Common myeloid progenitor, CD34-positive (primary cell): ENCODE measurements at regions of chr9 and their contacts with region 1.

Region 1: GRCh38 chr9:5886114-5886939 is 4.4 kb upstream of the MLANA start:
- DNase-seq: peak; percentile 78 to 86 (median 84)
- H3K4me3 ChIP-seq: no peak overlapping the region
- H3K27ac ChIP-seq: no peak overlapping the region
- H3K4me1 ChIP-seq: peaks cover 0 to 16% (median 7%) of the 10 kb centered on the region in 4 experiments
- H3K27me3 ChIP-seq: no peaks in the 10 kb centered on the region

Region 2: GRCh38 chr9:5749306-5749705 is 137.0 kb before region 1 on chr9:
- CTCF ChIA-PET with region 1: no interaction called
- POLR2A ChIA-PET with region 1: no interaction called
- DNase-seq: peak; percentile 3 to 68 (median 48)
- H3K4me3 ChIP-seq: no peak overlapping the region
- H3K27ac ChIP-seq: no peak overlapping the region
- H3K4me1 ChIP-seq: peaks cover 0 to 3% (median 0%) of the 10 kb centered on the region in 4 experiments
- H3K27me3 ChIP-seq: no peaks in the 10 kb centered on the region

Region 3: DNA sequence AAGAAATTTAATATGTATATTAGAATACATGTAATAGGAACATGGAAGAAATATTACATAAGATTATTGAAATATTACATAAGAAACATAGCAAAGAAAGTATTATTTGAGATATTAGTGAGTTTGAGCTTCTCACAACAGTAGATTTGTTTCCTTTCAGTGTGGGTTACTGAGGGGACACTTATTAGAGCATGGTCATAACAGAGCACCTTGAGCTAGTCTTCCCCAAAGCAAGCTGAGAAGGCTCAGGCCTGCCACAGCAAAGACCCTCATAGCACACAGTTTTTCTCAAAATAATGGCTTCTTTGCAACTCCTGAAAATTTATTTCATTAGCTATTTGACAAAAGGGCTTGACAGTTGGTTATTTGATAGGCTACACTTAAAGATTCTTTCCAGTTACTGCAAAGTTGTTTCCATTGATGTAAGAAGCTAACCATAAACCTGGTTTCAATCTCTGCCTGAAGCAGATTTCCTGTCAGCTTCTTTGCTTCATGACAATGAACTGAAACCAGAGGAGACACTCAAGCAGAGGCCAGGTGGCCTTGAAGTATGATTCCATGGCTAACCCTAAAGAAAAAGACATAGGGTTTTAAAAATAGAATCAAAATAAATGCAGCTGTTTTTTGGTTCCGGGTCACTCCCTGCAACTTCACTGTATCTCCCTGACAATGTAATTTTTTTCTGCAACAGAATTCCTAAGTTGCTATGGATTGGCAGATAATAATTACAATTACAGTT is 122.0 kb before region 1 on chr9:
- CTCF ChIA-PET with region 1: no interaction called
- POLR2A ChIA-PET with region 1: no interaction called
- DNase-seq: no peak
- H3K4me3 ChIP-seq: no peak overlapping the region
- H3K27ac ChIP-seq: no peak overlapping the region
- H3K4me1 ChIP-seq: no peaks in the 10 kb centered on the region
- H3K27me3 ChIP-seq: no peaks in the 10 kb centered on the region

Region 4: GRCh38 chr9:5799314-5799713 is 87.0 kb before region 1 on chr9:
- CTCF ChIA-PET with region 1: interaction called, 22 read pairs
- POLR2A ChIA-PET with region 1: no interaction called
- DNase-seq: peak; percentile 73 to 79 (median 77)
- H3K4me3 ChIP-seq: peak overlapping the region in 2 of 7 experiments; percentile 11 to 25
- H3K27ac ChIP-seq: peak overlapping the region in 1 of 2 experiments; percentile 7
- H3K4me1 ChIP-seq: peaks cover 3 to 13% (median 4%) of the 10 kb centered on the region in 4 experiments
- H3K27me3 ChIP-seq: no peaks in the 10 kb centered on the region

Region 5: GRCh38 chr9:5843794-5844504 is 42.4 kb before region 1 on chr9:
- CTCF ChIA-PET with region 1: interaction called, 19 read pairs
- POLR2A ChIA-PET with region 1: no interaction called
- DNase-seq: peak in 1 of 3 donors; percentile 63
- H3K4me3 ChIP-seq: peak overlapping the region in 3 of 7 experiments; percentile 44 to 65 (median 53)
- H3K27ac ChIP-seq: peak overlapping the region in 1 of 2 experiments; percentile 51
- H3K4me1 ChIP-seq: peaks cover 51 to 94% (median 83%) of the 10 kb centered on the region in 4 experiments
- H3K27me3 ChIP-seq: no peaks in the 10 kb centered on the region

Region 6: GRCh38 chr9:5863092-5863746 is 23.1 kb before region 1 on chr9:
- CTCF ChIA-PET with region 1: interaction called, 82 read pairs
- POLR2A ChIA-PET with region 1: no interaction called
- DNase-seq: no peak
- H3K4me3 ChIP-seq: no peak overlapping the region
- H3K27ac ChIP-seq: no peak overlapping the region
- H3K4me1 ChIP-seq: peaks cover 0 to 27% (median 12%) of the 10 kb centered on the region in 4 experiments
- H3K27me3 ChIP-seq: no peaks in the 10 kb centered on the region

Region 7: GRCh38 chr9:5899292-5899691 is 13.0 kb after region 1 on chr9:
- CTCF ChIA-PET with region 1: interaction called, 109 read pairs
- POLR2A ChIA-PET with region 1: no interaction called
- DNase-seq: peak; percentile 38 to 58 (median 56)
- H3K4me3 ChIP-seq: no peak overlapping the region
- H3K27ac ChIP-seq: no peak overlapping the region
- H3K4me1 ChIP-seq: peaks cover 0 to 14% (median 1%) of the 10 kb centered on the region in 4 experiments
- H3K27me3 ChIP-seq: no peaks in the 10 kb centered on the region

Region 8: DNA sequence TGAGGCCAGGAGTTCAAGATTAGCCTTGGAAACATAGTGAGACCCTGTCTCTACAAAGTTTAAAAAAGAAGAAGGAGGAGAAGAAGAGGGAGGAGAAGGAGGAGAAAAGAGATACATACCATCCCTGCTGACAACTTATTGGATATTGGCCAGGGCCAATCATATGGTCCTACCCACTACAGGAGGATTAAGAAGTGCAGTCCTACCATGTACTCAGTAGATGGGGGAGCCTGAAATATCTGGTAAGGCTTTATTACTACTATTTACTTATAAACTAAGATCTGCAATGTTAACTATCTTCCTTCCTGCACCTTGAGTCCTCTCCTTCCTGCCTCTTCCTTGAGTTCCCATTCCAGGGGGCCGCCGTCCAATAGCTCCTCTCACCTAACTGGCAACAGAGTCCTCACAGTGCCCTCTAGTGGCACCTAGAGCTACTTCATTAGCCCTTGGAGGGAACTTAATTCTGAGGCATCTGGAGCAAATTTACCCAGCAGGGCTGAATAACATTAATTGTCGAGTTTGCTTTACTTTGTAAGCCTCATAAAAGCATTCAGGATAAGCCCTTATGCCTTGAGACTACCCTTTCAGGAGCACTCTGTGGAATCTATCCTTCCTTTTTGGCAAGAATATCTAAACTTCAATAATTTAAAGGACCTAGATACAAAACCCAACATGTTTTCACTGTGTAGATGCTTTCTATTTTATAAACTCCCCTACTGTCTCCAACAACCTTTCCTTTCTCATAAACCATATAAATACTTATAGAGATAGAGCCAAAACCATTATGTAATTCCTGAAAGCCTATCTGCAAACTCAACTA is 168.2 kb after region 1 on chr9:
- CTCF ChIA-PET with region 1: interaction called, 11 read pairs
- POLR2A ChIA-PET with region 1: interaction called, 3 read pairs
- DNase-seq: peak; percentile 84 to 91 (median 89)
- H3K4me3 ChIP-seq: no peak overlapping the region
- H3K27ac ChIP-seq: no peak overlapping the region
- H3K4me1 ChIP-seq: peaks cover 0 to 5% (median 2%) of the 10 kb centered on the region in 4 experiments
- H3K27me3 ChIP-seq: no peaks in the 10 kb centered on the region